ENCODE measurements at regions of chr2 and their contacts with region 1.

Region 1: GRCh38 chr2:60540074-60540473 is 13.4 kb downstream of the BCL11A start:
- DNase-seq: no peak
- ATAC-seq: no peak
- H3K4me3 Mint-ChIP-seq: no peak overlapping the region
- H3K27ac Mint-ChIP-seq: no peak overlapping the region
- H3K4me1 Mint-ChIP-seq: no peaks in the 10 kb centered on the region
- H3K27me3 Mint-ChIP-seq: peaks cover 52% of the 10 kb centered on the region

Region 2: DNA sequence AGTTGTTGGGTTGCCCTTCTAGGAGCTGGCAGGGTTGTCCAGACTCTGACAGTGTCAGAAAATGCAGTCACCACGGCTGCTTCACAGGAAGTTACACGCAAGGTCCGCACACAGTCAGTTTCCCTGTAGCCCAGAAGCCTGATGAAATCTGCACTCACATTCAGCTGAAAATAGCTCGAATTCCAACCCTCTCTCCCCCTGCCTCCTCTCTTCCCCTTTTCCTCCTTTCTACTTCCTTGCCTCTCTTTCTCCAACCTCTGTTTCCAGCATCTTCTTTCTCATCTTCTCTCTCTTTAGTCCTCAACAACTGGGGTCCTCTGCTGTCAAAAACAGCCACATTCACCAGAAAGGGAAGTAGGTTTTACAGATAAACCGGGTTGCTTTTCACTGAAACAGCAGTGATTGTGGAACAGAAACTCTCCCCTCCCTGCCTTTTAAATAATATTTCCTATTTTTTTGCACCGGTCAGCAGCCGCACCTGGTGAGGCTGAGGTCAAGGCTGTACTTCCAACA is 55.9 kb before region 1 on chr2:
- CTCF ChIA-PET with region 1: no interaction called
- POLR2A ChIA-PET with region 1: no interaction called
- DNase-seq: no peak
- ATAC-seq: no peak
- H3K4me3 Mint-ChIP-seq: no peak overlapping the region
- H3K27ac Mint-ChIP-seq: no peak overlapping the region
- H3K4me1 Mint-ChIP-seq: peaks cover 2% of the 10 kb centered on the region
- H3K27me3 Mint-ChIP-seq: peaks cover 24% of the 10 kb centered on the region

Region 3: DNA sequence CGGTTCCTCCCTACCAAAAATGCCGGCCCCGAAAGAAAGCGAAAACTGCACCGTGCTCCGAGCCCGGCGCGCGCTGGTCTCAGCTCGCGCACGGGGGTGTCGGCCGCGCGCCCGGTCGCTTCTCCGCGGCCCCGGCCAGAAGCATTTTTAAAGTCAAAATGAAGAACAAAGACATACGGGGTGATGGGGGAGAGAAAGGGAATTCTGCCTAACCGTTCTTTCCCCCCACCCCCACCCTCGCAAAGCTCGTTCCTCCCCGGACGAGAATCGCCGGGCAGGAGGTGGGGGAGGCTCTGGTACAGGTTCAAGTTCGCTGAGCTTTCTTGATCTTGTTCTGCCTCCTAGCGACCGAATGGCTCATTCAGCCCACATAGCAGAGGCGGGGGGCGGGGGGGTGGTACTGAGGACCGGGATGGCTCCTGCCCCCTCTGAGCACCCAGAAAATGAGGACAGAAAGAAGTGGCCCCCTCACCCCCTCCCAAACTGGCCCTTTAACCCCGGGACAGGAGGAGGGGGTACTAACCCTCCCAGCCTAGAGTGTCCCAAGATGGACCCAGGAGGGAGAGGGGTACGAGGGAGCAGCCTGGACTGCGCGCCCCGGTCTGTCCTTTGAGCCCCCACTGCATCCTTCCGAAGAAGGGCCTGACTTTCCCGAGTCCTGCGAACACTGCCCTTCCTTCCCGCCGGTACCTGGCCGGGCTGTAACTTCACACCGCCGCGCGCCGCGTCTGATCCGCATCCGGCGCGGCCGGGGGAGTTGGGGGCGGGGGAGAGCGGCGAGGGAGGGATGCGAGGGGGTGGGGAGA is 10.3 kb after region 1 on chr2:
- CTCF ChIA-PET with region 1: interaction called, 18 read pairs
- POLR2A ChIA-PET with region 1: no interaction called
- DNase-seq: peak; percentile 62
- ATAC-seq: peak; percentile 53
- H3K4me3 Mint-ChIP-seq: peak overlapping the region; percentile 81
- H3K27ac Mint-ChIP-seq: no peak overlapping the region
- H3K4me1 Mint-ChIP-seq: peaks cover 33% of the 10 kb centered on the region
- H3K27me3 Mint-ChIP-seq: peaks cover 68% of the 10 kb centered on the region

Measured in activated CD8-positive, alpha-beta T cell treated with anti-CD3 and anti-CD28 coated beads, Interleukin-2, amount 10 ng/mL, durations not matched to agents 7 days and 5 days (primary cell).